Activated CD4-positive, alpha-beta T cell treated with anti-CD3 and anti-CD28 coated beads, Interleukin-2, amount 10 ng/mL, durations not matched to agents 24 days and 14 days (primary cell): ENCODE measurements at regions of chr18 and their contacts with region 1.

Region 1: GRCh38 chr18:23231340-23232021 is 96.2 kb downstream of the CABLES1 start:
- DNase-seq: peak; percentile 94
- H3K4me3 Mint-ChIP-seq: peak overlapping the region; percentile 57
- H3K27ac Mint-ChIP-seq: peak overlapping the region; percentile 91
- H3K4me1 Mint-ChIP-seq: peaks cover 57% of the 10 kb centered on the region
- H3K27me3 Mint-ChIP-seq: no peaks in the 10 kb centered on the region

Region 2: GRCh38 chr18:23071285-23071684 is 160.2 kb before region 1 on chr18:
- intact Hi-C with region 1: loop called (anchors 5 kb)
- DNase-seq: peak; percentile 96
- H3K4me3 Mint-ChIP-seq: peak overlapping the region; percentile 66
- H3K27ac Mint-ChIP-seq: peak overlapping the region; percentile 95
- H3K4me1 Mint-ChIP-seq: peaks cover 53% of the 10 kb centered on the region
- H3K27me3 Mint-ChIP-seq: no peaks in the 10 kb centered on the region

Region 3: DNA sequence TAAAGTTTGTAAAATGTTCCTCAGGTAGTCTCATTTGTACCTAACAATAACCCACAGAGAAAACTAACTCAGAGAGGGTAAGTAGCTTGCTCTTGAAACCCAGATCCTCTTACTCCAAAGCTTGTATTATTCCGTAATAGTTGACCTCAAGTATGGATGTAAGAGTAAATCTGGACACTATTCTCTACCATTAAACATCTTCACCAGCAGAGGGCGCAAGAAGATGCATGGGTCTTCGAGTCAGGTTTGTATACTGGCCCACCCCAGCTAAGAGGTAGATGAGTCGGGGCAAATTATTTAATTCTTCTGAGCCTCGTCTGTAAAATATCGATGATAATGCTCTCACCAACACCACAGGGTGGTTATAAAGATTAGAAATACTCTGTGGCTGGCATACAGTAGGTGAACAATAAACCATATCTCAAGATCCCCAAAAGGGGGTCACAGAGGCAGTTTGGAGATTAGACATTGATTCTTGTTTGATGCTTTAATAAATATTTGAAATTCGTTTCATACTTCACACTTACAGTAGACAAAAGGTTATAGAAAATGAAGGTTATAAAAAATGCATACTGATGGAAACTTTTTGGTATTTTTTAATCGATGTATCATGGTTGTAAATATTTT is 99.7 kb before region 1 on chr18:
- intact Hi-C with region 1: loop called (anchors 2 kb)
- DNase-seq: peak; percentile 89
- H3K4me3 Mint-ChIP-seq: no peak overlapping the region
- H3K27ac Mint-ChIP-seq: no peak overlapping the region
- H3K4me1 Mint-ChIP-seq: peaks cover 13% of the 10 kb centered on the region
- H3K27me3 Mint-ChIP-seq: peaks cover 8% of the 10 kb centered on the region

Region 4: DNA sequence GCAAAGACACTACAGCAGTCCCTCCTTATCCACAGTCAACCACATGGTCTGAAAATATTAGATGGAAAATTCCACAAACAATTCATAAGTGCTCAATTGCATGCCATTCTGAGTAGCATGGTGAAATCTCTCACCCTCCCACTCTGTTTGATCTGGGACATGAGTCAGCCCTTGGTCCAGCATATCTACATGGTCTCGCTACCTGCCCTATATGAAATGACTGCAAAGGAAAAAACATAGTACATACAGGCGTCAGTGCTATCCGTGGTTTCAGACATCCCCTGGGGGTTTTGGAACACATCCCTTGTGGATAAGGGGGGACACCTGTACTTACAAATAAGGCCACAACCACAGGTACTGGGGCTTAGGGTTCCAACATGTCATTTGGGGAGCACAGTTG is 22.4 kb before region 1 on chr18:
- intact Hi-C with region 1: loop called (anchors 1 kb)
- DNase-seq: no peak
- H3K4me3 Mint-ChIP-seq: no peak overlapping the region
- H3K27ac Mint-ChIP-seq: peak overlapping the region; percentile 84
- H3K4me1 Mint-ChIP-seq: peaks cover 11% of the 10 kb centered on the region
- H3K27me3 Mint-ChIP-seq: no peaks in the 10 kb centered on the region

Region 5: GRCh38 chr18:23283916-23284430 is 52.5 kb after region 1 on chr18:
- intact Hi-C with region 1: loop called (anchors 2 kb)
- DNase-seq: no peak
- H3K4me3 Mint-ChIP-seq: no peak overlapping the region
- H3K27ac Mint-ChIP-seq: peak overlapping the region; percentile 74
- H3K4me1 Mint-ChIP-seq: peaks cover 20% of the 10 kb centered on the region
- H3K27me3 Mint-ChIP-seq: no peaks in the 10 kb centered on the region

Region 6: GRCh38 chr18:23377669-23378301 is 146.3 kb after region 1 on chr18:
- intact Hi-C with region 1: loop called (anchors 1 kb)
- DNase-seq: peak; percentile 67
- H3K4me3 Mint-ChIP-seq: peak overlapping the region; percentile 25
- H3K27ac Mint-ChIP-seq: peak overlapping the region; percentile 81
- H3K4me1 Mint-ChIP-seq: peaks cover 16% of the 10 kb centered on the region
- H3K27me3 Mint-ChIP-seq: no peaks in the 10 kb centered on the region

Region 7: GRCh38 chr18:23529597-23529996 is 298.1 kb after region 1 on chr18:
- intact Hi-C with region 1: no loop called
- DNase-seq: no peak
- H3K4me3 Mint-ChIP-seq: no peak overlapping the region
- H3K27ac Mint-ChIP-seq: peak overlapping the region; percentile 48
- H3K4me1 Mint-ChIP-seq: peaks cover 4% of the 10 kb centered on the region
- H3K27me3 Mint-ChIP-seq: no peaks in the 10 kb centered on the region